Prostate gland (tissue), 2 donors: ENCODE measurements at regions of chr5 and their contacts with region 1.

Region 1: DNA sequence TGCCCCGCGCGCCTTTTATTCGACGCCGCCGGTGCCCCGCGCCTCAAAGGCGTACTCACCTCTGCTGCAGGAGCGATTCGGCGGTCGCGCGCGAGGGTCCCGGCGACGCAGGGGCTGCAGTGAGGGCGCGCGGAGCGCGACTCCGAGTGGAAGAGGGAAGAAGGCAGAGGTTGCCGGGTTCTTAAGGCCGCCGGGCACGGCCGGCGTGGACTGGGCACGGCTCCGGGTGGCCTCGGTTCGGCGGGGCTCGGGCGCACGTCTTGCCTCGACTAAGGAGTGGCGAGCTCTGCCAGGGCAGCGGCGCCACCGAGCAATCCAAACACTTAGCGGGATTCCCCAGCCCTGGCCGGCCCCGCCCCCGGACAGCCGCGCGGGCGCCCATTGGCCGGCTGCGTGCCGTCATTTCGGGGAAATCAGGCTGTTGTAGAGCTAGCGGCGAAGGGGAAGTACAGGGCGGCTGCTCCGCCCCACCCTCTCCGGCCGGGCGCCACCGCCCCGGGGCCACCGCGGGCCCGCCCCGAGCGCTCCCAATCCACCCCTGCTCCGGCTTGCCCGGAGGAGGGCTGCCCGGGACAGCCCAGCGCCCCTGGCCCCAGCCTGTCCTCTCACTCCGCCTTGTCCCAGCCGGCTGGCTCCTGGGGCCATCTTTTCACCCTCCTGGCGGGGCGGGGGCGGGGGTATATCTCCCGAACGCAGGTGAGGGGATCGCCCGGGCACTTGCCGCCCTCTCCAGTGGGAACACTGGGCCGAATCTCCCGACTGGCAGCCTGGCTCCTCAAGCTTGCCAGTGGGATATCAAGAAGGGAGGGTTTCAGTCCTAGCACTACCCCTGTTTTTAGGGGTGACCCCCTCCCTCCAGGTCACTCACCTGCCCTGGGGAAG is at the start of gene IRF1:
- DNase-seq: peak; percentile 97
- H3K4me3 ChIP-seq: peak within 1 kb of the TSS; percentile 70 to 85
- H3K27ac ChIP-seq: peak within 1 kb of the TSS; percentile 94 to 95
- H3K4me1 ChIP-seq: peaks cover 11% of the 10 kb centered on the region
- H3K27me3 ChIP-seq: no peaks in the 10 kb centered on the region
- CTCF ChIP-seq: peak in 2 of 4 experiments; percentile 26 to 55
- POLR2A ChIP-seq: peak; percentile 94
- total RNA-seq, gene IRF1: 42.2 to 47.0 TPM

Region 2: DNA sequence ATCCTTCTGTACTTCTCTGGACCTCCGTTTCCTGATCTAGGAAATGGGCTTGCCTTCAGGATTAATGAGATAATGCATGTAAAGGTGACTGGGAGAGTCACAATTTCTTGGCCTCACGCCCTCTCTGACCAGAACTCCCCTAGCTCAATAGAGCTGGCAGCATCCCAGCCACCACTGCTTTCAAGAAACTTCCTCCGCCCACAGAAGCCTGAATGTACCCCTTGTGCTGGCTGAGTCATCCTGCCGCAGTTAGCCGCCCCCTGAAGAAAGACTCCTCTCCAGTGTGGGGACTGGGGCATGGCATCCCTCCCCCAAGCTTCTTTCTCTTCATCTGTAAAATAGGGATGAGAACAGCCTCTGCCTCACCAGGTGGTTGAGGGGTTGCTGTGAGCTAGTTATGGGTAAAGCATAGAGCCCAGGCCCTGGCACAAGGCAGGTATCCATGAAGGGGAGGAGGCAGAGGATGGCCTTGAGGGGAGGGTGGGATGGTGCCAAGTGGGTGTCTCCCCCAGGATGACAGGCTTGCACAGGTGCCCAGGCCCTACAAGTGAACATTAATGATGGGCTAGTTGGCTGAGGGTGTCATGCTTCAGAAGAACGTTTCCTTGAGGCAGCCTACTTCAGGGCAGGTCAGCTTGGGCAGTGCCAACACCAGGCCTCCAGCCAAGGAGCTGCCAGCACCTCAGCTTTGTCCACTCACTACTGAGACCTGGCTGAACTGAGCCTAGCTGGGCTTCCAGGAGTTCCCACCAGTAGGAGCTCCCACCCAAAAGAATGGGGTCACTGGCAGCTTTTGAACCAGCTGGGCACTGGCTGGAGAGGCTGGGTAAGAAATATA is 229.8 kb before region 1 on chr5:
- intact Hi-C with region 1: loop called (anchors 10 kb)
- DNase-seq: no peak
- H3K4me3 ChIP-seq: no peak overlapping the region
- H3K27ac ChIP-seq: peak overlapping the region; percentile 88 to 91
- H3K4me1 ChIP-seq: peaks cover 23% of the 10 kb centered on the region
- H3K27me3 ChIP-seq: no peaks in the 10 kb centered on the region
- CTCF ChIP-seq: no peak
- POLR2A ChIP-seq: no peak

Region 3: DNA sequence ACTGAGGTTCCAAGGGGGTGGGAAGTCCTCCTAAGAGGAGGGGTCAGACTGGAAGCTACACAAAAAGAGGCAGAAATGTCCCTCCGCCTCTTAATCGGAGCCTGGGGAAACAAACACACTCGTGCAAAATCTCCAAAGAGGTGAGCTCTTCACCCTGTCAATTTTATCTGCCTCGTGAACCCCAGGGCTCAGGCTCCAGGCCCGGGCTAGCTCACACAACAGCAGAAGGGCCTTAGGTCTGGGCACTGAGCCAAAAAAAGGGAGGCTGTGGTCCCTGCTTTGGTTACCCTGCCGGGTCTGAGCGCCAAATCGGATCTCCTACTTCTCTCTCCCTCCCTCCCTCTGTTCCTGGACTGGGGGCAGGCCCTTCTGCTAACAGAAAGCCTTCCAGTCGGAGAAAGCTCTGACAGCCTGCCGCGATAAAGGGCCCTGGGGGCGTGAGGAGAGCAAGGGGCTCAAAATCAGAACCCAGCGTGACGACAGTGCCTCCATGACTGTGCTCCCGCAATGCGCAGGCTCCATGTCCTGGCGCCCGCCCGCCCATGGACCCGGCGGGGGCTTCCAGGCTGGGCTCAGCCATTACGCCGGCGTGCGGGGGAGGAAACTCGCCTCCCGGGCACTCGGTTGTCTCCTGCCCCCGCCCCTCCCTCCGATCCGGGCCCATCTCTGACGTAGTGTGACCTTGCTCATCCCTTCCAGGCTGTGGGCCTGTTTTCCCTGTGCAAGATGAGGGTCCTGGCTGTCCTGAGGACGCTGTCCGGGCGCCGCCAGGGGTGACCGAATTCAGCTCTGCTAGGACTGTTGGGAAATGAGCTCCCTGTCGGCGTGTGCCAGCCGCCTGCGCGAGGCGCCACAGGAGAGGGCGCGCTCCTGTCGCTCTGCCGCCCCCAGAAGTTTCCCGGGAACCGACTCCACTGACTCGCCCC is 197.4 kb before region 1 on chr5:
- intact Hi-C with region 1: loop called (anchors 10 kb)
- DNase-seq: peak; percentile 70
- H3K4me3 ChIP-seq: peak overlapping the region; percentile 50 to 57
- H3K27ac ChIP-seq: peak overlapping the region; percentile 97
- H3K4me1 ChIP-seq: peaks cover 6% of the 10 kb centered on the region
- H3K27me3 ChIP-seq: no peaks in the 10 kb centered on the region
- CTCF ChIP-seq: peak in 3 of 4 experiments; percentile 26 to 32 (median 28)
- POLR2A ChIP-seq: peak; percentile 55

Region 4: DNA sequence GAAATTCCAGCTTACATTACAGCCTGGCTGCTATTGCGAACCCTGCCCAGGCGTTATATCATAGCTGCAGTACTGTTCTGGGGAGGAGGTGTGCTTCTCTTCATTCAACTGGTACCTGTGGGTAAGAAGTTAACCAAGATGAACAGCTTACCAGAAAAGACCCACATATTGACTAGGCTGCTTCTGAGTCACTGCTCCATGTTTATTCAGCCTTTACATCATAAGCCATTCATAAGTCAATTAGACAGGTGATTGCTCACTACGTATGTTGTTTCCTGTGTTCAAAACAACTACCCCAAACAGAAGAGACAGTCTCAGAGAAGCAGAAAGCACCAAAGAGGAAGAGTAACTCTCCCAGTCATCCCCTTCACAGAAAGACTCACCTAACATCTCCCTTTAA is 155.9 kb before region 1 on chr5:
- intact Hi-C with region 1: no loop called
- DNase-seq: no peak
- H3K4me3 ChIP-seq: no peak overlapping the region
- H3K27ac ChIP-seq: no peak overlapping the region
- H3K4me1 ChIP-seq: no peaks in the 10 kb centered on the region
- H3K27me3 ChIP-seq: no peaks in the 10 kb centered on the region
- CTCF ChIP-seq: no peak
- POLR2A ChIP-seq: no peak

Region 5: DNA sequence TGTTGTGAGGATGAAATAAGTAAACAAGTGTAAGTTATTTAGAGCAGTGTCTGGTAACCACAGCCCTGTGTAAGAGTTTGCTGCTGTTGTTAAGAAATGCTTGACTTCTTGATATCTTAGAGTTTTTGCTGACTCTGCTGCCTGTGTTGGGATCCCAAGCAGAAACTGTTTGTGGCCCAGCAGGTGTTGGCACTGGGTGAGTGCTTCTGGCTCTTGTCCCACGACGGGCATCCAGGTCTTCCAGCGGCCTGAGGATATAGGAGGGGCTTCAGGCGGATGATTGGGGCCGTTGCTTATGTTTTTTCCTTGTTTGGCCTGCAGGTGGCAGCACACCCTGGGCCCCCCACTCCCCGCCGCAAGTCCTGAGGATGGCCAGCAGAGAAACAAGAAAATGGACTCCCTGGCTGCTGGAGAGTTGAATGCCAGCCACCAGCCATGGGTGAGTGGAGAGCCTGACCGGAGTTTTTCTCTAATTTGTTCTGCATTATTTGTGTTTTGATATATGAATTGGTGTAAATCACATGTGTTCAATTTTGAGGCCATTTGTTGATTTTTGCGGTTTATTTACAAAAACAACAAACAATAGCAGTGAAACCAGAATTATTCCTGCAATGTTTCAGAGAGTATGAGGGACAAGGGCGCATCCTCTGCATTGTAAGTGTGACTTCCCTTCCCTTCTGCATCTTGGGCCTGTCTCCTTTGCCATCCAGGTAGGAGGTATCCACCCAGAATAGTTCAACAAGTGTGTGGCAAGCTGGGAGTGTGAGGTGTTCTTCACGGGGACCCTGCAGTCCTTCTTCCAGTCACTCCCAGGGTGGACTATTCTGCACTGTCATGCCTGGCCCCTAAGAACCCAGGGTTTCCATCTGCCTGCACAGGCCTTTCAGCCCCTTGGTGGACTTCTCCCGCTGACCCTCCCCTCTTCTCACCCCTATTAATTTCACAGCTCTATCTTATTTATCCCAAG is 70.9 kb before region 1 on chr5:
- intact Hi-C with region 1: loop called (anchors 2 kb)
- DNase-seq: peak; percentile 67
- H3K4me3 ChIP-seq: no peak overlapping the region
- H3K27ac ChIP-seq: peak overlapping the region in 1 of 2 donors; percentile 50
- H3K4me1 ChIP-seq: peaks cover 11% of the 10 kb centered on the region
- H3K27me3 ChIP-seq: no peaks in the 10 kb centered on the region
- CTCF ChIP-seq: peak; percentile 83 to 91 (median 88)
- POLR2A ChIP-seq: no peak

Region 6: DNA sequence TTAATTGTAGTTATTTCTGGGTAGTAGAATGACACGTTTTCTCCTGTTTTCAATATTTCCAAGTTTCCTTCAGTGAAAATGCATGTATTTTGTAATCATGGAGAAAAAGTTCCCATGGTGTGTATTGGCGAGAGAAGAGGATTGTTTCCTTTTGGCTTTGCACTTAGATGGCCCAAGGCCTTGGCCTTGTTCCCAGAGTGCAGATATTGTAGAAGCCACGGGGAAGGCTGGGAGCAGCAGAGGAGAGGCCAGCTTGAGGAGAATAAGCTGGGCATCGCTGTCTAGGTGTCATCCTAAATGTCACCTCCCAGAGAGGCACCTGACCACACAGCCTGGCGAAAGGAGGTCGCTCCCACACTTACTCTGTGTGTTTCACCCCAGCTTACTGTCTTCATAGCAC is 44.1 kb before region 1 on chr5:
- intact Hi-C with region 1: loop called (anchors 1 kb)
- DNase-seq: peak; percentile 69
- H3K4me3 ChIP-seq: no peak overlapping the region
- H3K27ac ChIP-seq: peak overlapping the region in 1 of 2 donors; percentile 1
- H3K4me1 ChIP-seq: no peaks in the 10 kb centered on the region
- H3K27me3 ChIP-seq: no peaks in the 10 kb centered on the region
- CTCF ChIP-seq: no peak
- POLR2A ChIP-seq: no peak